Naive thymus-derived CD4-positive, alpha-beta T cell (primary cell): ENCODE measurements at regions of chr4 and their contacts with region 1.

Region 1: DNA sequence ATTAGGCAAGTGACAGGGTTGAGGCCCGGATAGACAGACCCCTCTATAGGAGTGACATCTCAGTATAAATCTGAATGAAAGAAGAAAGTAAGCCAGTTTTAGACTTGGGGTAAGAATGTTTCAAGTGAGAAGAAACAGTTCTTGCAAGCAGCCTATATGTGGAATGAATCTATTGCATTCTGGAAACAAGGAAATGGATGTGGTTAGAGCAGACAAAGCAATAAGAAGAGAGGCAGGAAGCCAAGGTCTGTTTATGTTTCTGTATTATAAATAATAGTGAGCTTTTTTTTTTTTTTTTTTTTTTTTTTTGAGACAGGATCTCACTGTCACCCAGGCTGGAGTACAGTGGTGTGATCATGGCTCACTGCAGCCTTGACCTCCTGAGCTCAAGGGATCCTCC is 255.8 kb downstream of the UNC5C start:
- DNase-seq: peak in 7 of 9 donors; percentile 11 to 68 (median 43)
- ATAC-seq: peak; percentile 83
- H3K4me3 ChIP-seq: no peak overlapping the region
- H3K4me3 Mint-ChIP-seq: peak overlapping the region in 8 of 10 donors; percentile 13 to 68 (median 26)
- H3K27ac ChIP-seq: no peak overlapping the region
- H3K27ac Mint-ChIP-seq: peak overlapping the region in 8 of 9 donors; percentile 7 to 77 (median 40)
- H3K4me1 ChIP-seq: peaks cover 0 to 30% of the 10 kb centered on the region in 2 donors
- H3K4me1 Mint-ChIP-seq: peaks cover 21 to 63% (median 53%) of the 10 kb centered on the region in 7 donors
- H3K27me3 ChIP-seq: no peaks in the 10 kb centered on the region
- H3K27me3 Mint-ChIP-seq: no peaks in the 10 kb centered on the region

Region 2: GRCh38 chr4:95188701-95189370 is 104.2 kb before region 1 on chr4:
- CTCF ChIA-PET with region 1: no interaction called
- POLR2A ChIA-PET with region 1: no interaction called
- intact Hi-C with region 1: loop called in 1 of 2 experiments (anchors 2 kb)
- DNase-seq: peak in 6 of 9 donors; percentile 11 to 41 (median 24)
- ATAC-seq: peak; percentile 69
- H3K4me3 ChIP-seq: no peak overlapping the region
- H3K4me3 Mint-ChIP-seq: peak overlapping the region in 6 of 10 donors; percentile 13 to 56 (median 36)
- H3K27ac ChIP-seq: peak overlapping the region; percentile 38
- H3K27ac Mint-ChIP-seq: peak overlapping the region in 8 of 9 donors; percentile 65 to 88 (median 80)
- H3K4me1 ChIP-seq: peaks cover 0 to 23% of the 10 kb centered on the region in 2 donors
- H3K4me1 Mint-ChIP-seq: peaks cover 19 to 52% (median 32%) of the 10 kb centered on the region in 7 donors
- H3K27me3 ChIP-seq: no peaks in the 10 kb centered on the region
- H3K27me3 Mint-ChIP-seq: no peaks in the 10 kb centered on the region

Region 3: GRCh38 chr4:95325665-95326064 is 32.7 kb after region 1 on chr4:
- CTCF ChIA-PET with region 1: no interaction called
- POLR2A ChIA-PET with region 1: no interaction called
- intact Hi-C with region 1: no loop called
- DNase-seq: no peak
- ATAC-seq: no peak
- H3K4me3 ChIP-seq: no peak overlapping the region
- H3K4me3 Mint-ChIP-seq: no peak overlapping the region
- H3K27ac ChIP-seq: no peak overlapping the region
- H3K27ac Mint-ChIP-seq: no peak overlapping the region
- H3K4me1 ChIP-seq: no peaks in the 10 kb centered on the region
- H3K4me1 Mint-ChIP-seq: no peaks in the 10 kb centered on the region
- H3K27me3 ChIP-seq: no peaks in the 10 kb centered on the region
- H3K27me3 Mint-ChIP-seq: no peaks in the 10 kb centered on the region

Region 4: DNA sequence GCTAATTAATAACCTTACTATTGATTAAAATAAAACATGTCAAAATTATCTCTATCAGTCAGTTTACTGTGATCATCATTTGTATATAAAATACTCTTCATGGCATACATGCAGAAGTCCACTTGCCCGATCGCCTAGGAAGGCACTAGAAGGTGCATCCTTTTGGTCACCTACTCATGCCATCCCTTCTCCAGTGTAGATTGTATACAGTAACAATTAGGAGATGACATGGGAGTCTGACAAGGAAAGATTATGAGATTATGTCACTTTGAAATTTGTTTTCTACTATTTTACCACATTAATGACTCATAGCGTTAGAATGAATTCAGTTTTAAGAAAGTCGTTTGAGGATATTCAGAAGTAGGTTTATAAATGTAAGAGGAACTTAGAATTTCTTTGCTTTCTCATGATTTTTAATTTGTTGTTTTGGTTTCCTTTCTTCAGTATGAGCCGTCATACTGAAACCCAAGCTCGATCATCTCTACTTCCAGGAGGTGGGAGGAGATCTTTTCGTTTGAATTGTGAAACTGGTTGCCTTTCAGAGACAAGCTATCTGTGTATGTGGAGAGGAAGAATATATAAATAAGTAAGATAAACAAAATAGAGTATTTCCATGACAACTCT is 306.9 kb after region 1 on chr4:
- CTCF ChIA-PET with region 1: no interaction called
- POLR2A ChIA-PET with region 1: no interaction called
- intact Hi-C with region 1: no loop called
- DNase-seq: no peak
- ATAC-seq: no peak
- H3K4me3 ChIP-seq: no peak overlapping the region
- H3K4me3 Mint-ChIP-seq: peak overlapping the region in 1 of 10 donors; percentile 18
- H3K27ac ChIP-seq: no peak overlapping the region
- H3K27ac Mint-ChIP-seq: no peak overlapping the region
- H3K4me1 ChIP-seq: no peaks in the 10 kb centered on the region
- H3K4me1 Mint-ChIP-seq: peaks cover 0 to 10% (median 0%) of the 10 kb centered on the region in 7 donors
- H3K27me3 ChIP-seq: no peaks in the 10 kb centered on the region
- H3K27me3 Mint-ChIP-seq: peaks cover 0 to 21% (median 0%) of the 10 kb centered on the region in 5 donors